ENCODE measurements at regions of chr1 and their contacts with region 1.

Region 1: GRCh38 chr1:28329395-28330153 is 734 bp downstream of the MED18 start:
- DNase-seq: peak; percentile 32 to 61
- H3K4me3 ChIP-seq: peak overlapping the region; percentile 55 to 66 (median 64)
- H3K27ac ChIP-seq: peak overlapping the region; percentile 85 to 97 (median 87)
- H3K4me1 ChIP-seq: peaks cover 15 to 34% (median 20%) of the 10 kb centered on the region in 4 donors
- H3K27me3 ChIP-seq: no peaks in the 10 kb centered on the region
- CTCF ChIP-seq: no peak
- EP300 ChIP-seq: no peak
- POLR2A ChIP-seq: no peak

Region 2: GRCh38 chr1:28144203-28145135 is 185.1 kb before region 1 on chr1:
- intact Hi-C with region 1: no loop called
- DNase-seq: no peak
- H3K4me3 ChIP-seq: no peak overlapping the region
- H3K27ac ChIP-seq: no peak overlapping the region
- H3K4me1 ChIP-seq: no peaks in the 10 kb centered on the region
- H3K27me3 ChIP-seq: no peaks in the 10 kb centered on the region
- CTCF ChIP-seq: no peak
- EP300 ChIP-seq: no peak
- POLR2A ChIP-seq: no peak

Region 3: GRCh38 chr1:28259307-28260167 is 70.0 kb before region 1 on chr1 and contains the start of gene SESN2:
- intact Hi-C with region 1: loop called (anchors 10 kb)
- DNase-seq: peak; percentile 99 to 100
- H3K4me3 ChIP-seq: peak within 1 kb of the TSS; percentile 84 to 99 (median 92)
- H3K27ac ChIP-seq: peak within 1 kb of the TSS; percentile 89 to 96 (median 91)
- H3K4me1 ChIP-seq: peaks cover 11 to 49% (median 41%) of the 10 kb centered on the region in 4 donors
- H3K27me3 ChIP-seq: no peaks in the 10 kb centered on the region
- CTCF ChIP-seq: no peak
- EP300 ChIP-seq: no peak
- POLR2A ChIP-seq: peak in 2 of 4 donors; percentile 91 to 92
- total RNA-seq, gene SESN2: 2.3 to 20.3 (median 3.3) TPM